ENCODE measurements at regions of chr3 and their contacts with region 1.

Region 1: GRCh38 chr3:197256836-197257444 is 41.5 kb downstream of the DLG1 start:
- DNase-seq: no peak
- ATAC-seq: peak; percentile 42
- H3K4me3 ChIP-seq: no peak overlapping the region
- H3K27ac ChIP-seq: no peak overlapping the region
- H3K4me1 ChIP-seq: no peaks in the 10 kb centered on the region
- H3K27me3 ChIP-seq: no peaks in the 10 kb centered on the region
- CTCF ChIP-seq: peak; percentile 82

Region 2: DNA sequence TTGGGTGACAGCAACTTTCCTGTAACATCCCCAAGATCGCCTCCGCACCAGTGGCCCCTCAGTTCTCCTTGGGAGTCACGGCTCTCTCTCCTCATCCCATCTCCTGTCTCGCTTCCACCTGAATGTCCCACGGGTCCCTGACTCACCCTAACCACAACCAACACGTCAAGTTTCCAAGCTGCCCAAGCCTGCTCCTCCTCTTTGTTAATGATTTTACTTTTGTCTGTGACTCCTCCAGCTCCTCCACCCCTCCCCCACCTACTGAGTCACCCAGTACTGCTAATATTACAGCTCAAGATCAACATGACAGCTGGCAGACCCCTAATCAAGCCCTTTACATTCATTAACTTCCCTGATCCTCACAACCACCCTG is 259.6 kb after region 1 on chr3:
- intact Hi-C with region 1: loop called (anchors 10 kb)
- DNase-seq: no peak
- ATAC-seq: no peak
- H3K4me3 ChIP-seq: no peak overlapping the region
- H3K27ac ChIP-seq: no peak overlapping the region
- H3K4me1 ChIP-seq: peaks cover 3% of the 10 kb centered on the region
- H3K27me3 ChIP-seq: no peaks in the 10 kb centered on the region
- CTCF ChIP-seq: no peak